SK-N-SH (cell line): ENCODE measurements at regions of chr7 and their contacts with region 1.

Region 1: GRCh38 chr7:128076796-128077271 is 45.6 kb upstream of the LRRC4 start:
- DNase-seq: peak; percentile 71
- H3K4me3 ChIP-seq: no peak overlapping the region
- H3K27ac ChIP-seq: peak overlapping the region in 1 of 2 experiments; percentile 62; a peak in 2 of 4 replicates
- H3K4me1 ChIP-seq: peaks cover 0 to 60% of the 10 kb centered on the region in 2 experiments; a peak in 2 of 4 replicates
- H3K27me3 ChIP-seq: no peaks in the 10 kb centered on the region
- CTCF ChIP-seq: no peak
- EP300 ChIP-seq: peak in 1 of 2 experiments; percentile 31; a peak in 1 of 4 replicates
- RAD21 ChIP-seq: 0 out of 2 replicates have a peak, but pooled peaks have one; percentile 5

Region 2: DNA sequence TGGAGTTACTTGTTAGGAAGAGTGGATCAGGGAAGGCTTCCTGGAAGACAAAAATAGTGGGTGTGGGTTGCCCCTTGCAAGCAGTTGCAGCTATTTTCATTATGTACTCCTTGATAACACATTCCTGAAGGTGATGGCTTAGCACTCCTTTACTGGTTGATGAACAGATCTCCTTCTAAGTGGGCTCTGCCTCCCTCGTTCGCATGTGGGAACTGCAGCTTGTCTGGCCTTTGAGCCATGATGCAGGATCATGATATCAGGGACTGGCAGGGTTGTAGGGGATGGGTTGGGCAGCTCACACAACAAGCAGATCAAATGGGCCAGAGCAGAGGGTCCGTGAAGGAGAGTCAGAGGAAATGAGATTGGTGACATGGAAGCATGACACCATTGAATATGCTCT is 16.8 kb before region 1 on chr7:
- CTCF ChIA-PET with region 1: interaction called, 13 read pairs
- POLR2A ChIA-PET with region 1: no interaction called
- DNase-seq: no peak
- H3K4me3 ChIP-seq: no peak overlapping the region
- H3K27ac ChIP-seq: no peak overlapping the region
- H3K4me1 ChIP-seq: peaks cover 6 to 19% of the 10 kb centered on the region in 2 experiments; a peak in 3 of 4 replicates
- H3K27me3 ChIP-seq: no peaks in the 10 kb centered on the region
- CTCF ChIP-seq: no peak
- EP300 ChIP-seq: no peak
- RAD21 ChIP-seq: no peak

Region 3: DNA sequence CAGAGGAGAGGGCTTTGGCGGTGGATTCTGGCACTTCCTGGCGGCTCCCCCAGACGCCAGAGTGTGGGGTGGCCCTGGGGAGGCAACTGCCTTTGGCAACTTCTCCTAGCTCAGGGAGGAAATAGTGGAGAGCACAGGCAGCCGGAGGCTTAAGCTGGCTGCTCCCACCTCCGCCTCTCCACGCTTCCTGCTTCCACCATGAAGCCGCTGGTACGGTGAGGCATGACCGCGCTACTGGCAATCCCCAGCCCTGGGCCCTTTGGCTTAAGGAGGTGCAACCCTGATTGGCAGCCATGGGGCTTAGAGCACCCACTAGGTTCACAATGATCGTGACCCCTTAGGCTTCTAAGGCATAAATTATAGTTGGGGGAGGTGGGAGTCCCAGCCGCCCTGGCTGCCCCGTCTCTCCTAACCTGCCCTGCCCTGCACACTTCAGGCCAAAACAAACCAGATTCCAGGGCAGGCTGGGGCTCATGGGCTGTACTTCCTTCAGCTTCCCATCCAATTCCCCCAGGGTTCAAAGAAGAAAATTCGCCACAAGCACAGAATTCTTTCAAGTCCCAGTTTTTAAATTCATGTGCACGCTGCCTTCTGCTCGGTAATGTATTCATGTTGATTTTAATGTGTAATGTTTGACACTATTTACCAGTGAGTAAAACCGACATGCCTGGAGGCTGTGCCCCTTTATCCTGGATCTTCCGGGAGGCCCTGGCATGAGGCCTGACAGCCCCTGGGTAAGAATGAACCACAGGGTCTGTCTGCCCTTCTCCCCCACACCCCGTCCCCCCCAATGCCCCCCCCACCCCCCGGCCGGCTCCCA is 45.1 kb after region 1 on chr7:
- CTCF ChIA-PET with region 1: no interaction called
- POLR2A ChIA-PET with region 1: no interaction called
- DNase-seq: no peak
- H3K4me3 ChIP-seq: no peak overlapping the region
- H3K27ac ChIP-seq: no peak overlapping the region
- H3K4me1 ChIP-seq: peaks cover 0 to 34% of the 10 kb centered on the region in 2 experiments; a peak in 1 of 4 replicates
- H3K27me3 ChIP-seq: peaks cover 21% of the 10 kb centered on the region
- CTCF ChIP-seq: no peak
- EP300 ChIP-seq: no peak
- RAD21 ChIP-seq: no peak